ENCODE measurements at regions of chr6 and their contacts with region 1.

Region 1: DNA sequence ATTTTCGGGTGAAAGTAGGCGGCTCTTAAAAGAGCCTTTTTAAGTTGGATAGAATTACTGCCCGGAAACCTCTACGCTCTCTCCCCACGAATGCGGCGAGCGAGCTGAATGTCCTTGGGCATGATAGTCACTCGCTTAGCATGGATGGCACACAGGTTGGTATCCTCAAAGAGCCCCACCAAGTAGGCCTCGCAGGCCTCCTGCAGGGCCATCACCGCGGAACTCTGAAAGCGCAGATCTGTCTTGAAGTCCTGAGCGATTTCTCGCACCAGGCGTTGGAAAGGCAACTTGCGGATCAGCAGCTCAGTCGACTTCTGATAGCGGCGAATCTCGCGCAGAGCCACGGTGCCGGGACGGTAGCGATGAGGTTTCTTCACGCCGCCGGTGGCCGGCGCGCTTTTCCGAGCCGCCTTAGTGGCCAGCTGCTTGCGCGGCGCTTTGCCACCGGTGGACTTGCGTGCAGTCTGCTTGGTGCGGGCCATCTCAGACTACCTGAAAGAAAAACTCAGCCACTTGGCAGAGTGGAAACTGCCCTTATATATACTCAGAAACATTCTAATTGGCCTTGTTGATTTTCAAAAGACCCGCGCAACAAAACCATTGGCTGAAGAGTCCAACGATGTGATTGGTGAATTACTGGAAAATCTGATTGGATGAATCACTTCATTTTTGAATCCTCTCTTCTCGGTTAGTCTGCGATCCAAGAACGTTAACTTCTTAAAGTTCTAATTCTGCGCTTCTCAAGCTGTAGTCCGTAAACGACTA is 93.9 kb upstream of the BTN3A2 start:
- DNase-seq: peak; percentile 90
- ATAC-seq: peak; percentile 19
- H3K4me3 ChIP-seq: peak overlapping the region; percentile 63 to 88 (median 75)
- H3K4me3 Mint-ChIP-seq: no peak overlapping the region
- H3K27ac ChIP-seq: peak overlapping the region; percentile 79 to 86
- H3K27ac Mint-ChIP-seq: no peak overlapping the region
- H3K4me1 ChIP-seq: peaks cover 15 to 37% of the 10 kb centered on the region in 2 donors
- H3K4me1 Mint-ChIP-seq: peaks cover 20% of the 10 kb centered on the region
- H3K27me3 ChIP-seq: no peaks in the 10 kb centered on the region
- H3K27me3 Mint-ChIP-seq: no peaks in the 10 kb centered on the region
- CTCF ChIP-seq: no peak

Region 2: DNA sequence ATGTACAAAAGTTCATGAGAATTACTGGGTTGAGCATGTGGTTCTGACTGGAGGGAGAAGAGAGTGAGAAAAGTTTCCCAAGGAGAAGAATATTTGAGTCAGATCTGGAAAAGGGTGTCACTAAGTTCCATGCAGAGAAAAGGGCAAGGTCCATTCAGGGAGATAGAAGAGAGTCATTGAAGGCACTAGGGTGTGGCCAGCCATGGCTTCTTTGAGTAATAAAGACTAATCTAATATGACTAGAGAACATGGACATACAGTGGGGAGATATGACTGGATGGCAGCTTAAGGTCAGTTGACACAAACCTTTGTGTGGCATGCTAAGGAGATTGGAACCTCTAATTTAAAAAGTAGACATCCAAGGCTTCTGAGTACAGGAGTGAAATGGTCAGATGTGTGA is 527.2 kb before region 1 on chr6:
- CTCF ChIA-PET with region 1: no interaction called
- POLR2A ChIA-PET with region 1: no interaction called
- intact Hi-C with region 1: no loop called
- DNase-seq: no peak
- ATAC-seq: no peak
- H3K4me3 ChIP-seq: no peak overlapping the region
- H3K4me3 Mint-ChIP-seq: no peak overlapping the region
- H3K27ac ChIP-seq: no peak overlapping the region
- H3K27ac Mint-ChIP-seq: no peak overlapping the region
- H3K4me1 ChIP-seq: no peaks in the 10 kb centered on the region
- H3K4me1 Mint-ChIP-seq: peaks cover under 1% of the 10 kb centered on the region
- H3K27me3 ChIP-seq: peaks cover 0 to under 1% (median 0%) of the 10 kb centered on the region in 4 experiments
- H3K27me3 Mint-ChIP-seq: peaks cover 8% of the 10 kb centered on the region
- CTCF ChIP-seq: no peak

Region 3: GRCh38 chr6:25793970-25794369 is 477.1 kb before region 1 on chr6:
- CTCF ChIA-PET with region 1: no interaction called
- POLR2A ChIA-PET with region 1: no interaction called
- intact Hi-C with region 1: no loop called
- DNase-seq: no peak
- ATAC-seq: no peak
- H3K4me3 ChIP-seq: no peak overlapping the region
- H3K4me3 Mint-ChIP-seq: no peak overlapping the region
- H3K27ac ChIP-seq: no peak overlapping the region
- H3K27ac Mint-ChIP-seq: no peak overlapping the region
- H3K4me1 ChIP-seq: no peaks in the 10 kb centered on the region
- H3K4me1 Mint-ChIP-seq: no peaks in the 10 kb centered on the region
- H3K27me3 ChIP-seq: no peaks in the 10 kb centered on the region
- H3K27me3 Mint-ChIP-seq: peaks cover 10% of the 10 kb centered on the region
- CTCF ChIP-seq: no peak

Region 4: DNA sequence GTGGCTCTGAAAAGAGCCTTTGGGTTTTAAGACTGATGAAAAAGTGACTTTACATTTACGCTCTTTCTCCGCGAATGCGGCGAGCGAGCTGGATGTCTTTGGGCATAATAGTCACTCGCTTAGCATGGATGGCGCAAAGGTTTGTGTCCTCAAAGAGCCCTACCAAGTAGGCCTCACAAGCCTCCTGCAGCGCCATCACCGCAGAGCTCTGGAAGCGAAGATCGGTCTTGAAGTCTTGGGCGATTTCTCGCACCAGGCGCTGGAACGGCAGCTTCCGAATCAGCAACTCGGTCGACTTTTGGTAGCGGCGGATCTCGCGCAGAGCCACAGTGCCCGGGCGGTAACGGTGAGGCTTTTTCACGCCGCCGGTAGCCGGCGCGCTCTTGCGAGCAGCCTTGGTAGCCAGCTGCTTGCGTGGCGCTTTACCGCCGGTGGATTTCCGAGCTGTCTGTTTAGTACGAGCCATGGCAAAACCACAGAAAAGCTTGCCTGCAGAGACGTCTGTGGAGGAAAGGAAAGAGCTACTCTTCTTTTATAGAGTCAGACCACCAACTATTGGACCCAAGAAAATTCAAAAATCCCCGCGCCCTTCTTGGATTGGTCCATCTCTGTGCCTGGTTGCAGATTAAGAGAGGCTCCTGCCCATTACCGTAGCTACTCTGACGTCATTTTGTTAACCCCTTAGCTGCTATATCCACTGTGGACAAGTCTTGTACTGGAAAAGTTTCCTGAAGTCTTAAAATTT is 239.3 kb before region 1 on chr6:
- CTCF ChIA-PET with region 1: no interaction called
- POLR2A ChIA-PET with region 1: interaction called, 3 read pairs
- intact Hi-C with region 1: loop called (anchors 5 kb)
- DNase-seq: peak; percentile 90
- ATAC-seq: peak; percentile 63
- H3K4me3 ChIP-seq: peak overlapping the region; percentile 67 to 85 (median 69)
- H3K4me3 Mint-ChIP-seq: peak overlapping the region; percentile 96
- H3K27ac ChIP-seq: peak overlapping the region; percentile 76 to 78
- H3K27ac Mint-ChIP-seq: peak overlapping the region; percentile 87
- H3K4me1 ChIP-seq: peaks cover 26 to 36% of the 10 kb centered on the region in 2 donors
- H3K4me1 Mint-ChIP-seq: peaks cover 46% of the 10 kb centered on the region
- H3K27me3 ChIP-seq: no peaks in the 10 kb centered on the region
- H3K27me3 Mint-ChIP-seq: no peaks in the 10 kb centered on the region
- CTCF ChIP-seq: no peak

Region 5: GRCh38 chr6:26204332-26205165 is 66.5 kb before region 1 on chr6:
- CTCF ChIA-PET with region 1: interaction called, 31 read pairs
- POLR2A ChIA-PET with region 1: interaction called, 73 read pairs
- intact Hi-C with region 1: loop called (anchors 2 kb)
- DNase-seq: peak; percentile 96
- ATAC-seq: peak; percentile 65
- H3K4me3 ChIP-seq: peak overlapping the region; percentile 76 to 94 (median 81)
- H3K4me3 Mint-ChIP-seq: no peak overlapping the region
- H3K27ac ChIP-seq: peak overlapping the region; percentile 88 to 96
- H3K27ac Mint-ChIP-seq: no peak overlapping the region
- H3K4me1 ChIP-seq: peaks cover 26 to 38% of the 10 kb centered on the region in 2 donors
- H3K4me1 Mint-ChIP-seq: peaks cover 30% of the 10 kb centered on the region
- H3K27me3 ChIP-seq: no peaks in the 10 kb centered on the region
- H3K27me3 Mint-ChIP-seq: no peaks in the 10 kb centered on the region
- CTCF ChIP-seq: no peak

Region 6: DNA sequence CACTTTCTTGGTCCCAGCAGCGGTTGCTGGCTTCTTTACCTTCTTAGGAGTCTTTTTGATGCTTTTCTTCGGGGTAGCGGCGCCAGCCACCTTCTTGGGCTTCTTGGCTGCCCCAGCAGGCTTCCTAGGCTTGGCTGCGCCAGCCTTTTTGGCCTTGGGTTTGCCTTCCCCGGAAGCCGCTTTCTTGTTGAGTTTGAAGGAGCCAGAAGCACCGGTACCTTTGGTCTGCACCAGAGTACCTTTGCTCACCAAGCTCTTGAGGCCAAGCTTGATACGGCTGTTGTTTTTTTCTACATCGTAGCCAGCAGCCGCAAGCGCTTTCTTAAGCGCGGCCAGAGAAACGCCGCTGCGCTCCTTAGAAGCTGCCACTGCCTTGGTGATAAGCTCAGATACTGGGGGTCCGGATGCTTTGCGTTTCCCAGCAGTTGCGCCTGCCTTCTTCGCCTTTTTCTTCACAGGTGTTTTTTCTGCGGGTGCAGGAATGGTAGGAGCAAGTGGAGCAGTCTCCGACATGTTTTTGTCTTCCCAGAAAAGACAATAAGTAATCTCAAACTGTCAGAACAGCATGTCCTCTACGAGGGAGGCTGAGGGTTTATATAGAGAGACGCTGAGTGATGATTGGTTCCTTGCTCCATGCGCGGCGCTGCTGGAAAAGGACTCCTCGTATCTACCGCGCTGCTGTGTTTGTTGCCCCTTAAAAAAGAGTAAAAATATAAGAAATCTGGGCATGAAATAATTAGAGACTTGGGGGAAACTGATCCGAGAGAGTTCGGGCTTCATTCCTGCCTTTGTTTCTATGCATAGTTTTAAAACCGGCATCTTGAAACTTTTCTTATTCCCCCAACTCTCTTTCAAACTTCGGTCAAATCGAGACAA is 36.4 kb before region 1 on chr6:
- CTCF ChIA-PET with region 1: interaction called, 14 read pairs
- POLR2A ChIA-PET with region 1: interaction called, 60 read pairs
- intact Hi-C with region 1: loop called (anchors 5 kb)
- DNase-seq: peak; percentile 87
- ATAC-seq: peak; percentile 76
- H3K4me3 ChIP-seq: peak overlapping the region; percentile 70 to 99 (median 85)
- H3K4me3 Mint-ChIP-seq: peak overlapping the region; percentile 93
- H3K27ac ChIP-seq: peak overlapping the region; percentile 86 to 90
- H3K27ac Mint-ChIP-seq: peak overlapping the region; percentile 95
- H3K4me1 ChIP-seq: peaks cover 13 to 21% of the 10 kb centered on the region in 2 donors
- H3K4me1 Mint-ChIP-seq: peaks cover 23% of the 10 kb centered on the region
- H3K27me3 ChIP-seq: no peaks in the 10 kb centered on the region
- H3K27me3 Mint-ChIP-seq: no peaks in the 10 kb centered on the region
- CTCF ChIP-seq: no peak

Region 7: GRCh38 chr6:26285143-26286134 is 14.4 kb after region 1 on chr6:
- CTCF ChIA-PET with region 1: interaction called, 51 read pairs
- POLR2A ChIA-PET with region 1: interaction called, 99 read pairs
- intact Hi-C with region 1: loop called (anchors 1 kb)
- DNase-seq: peak; percentile 99
- ATAC-seq: peak; percentile 76
- H3K4me3 ChIP-seq: peak overlapping the region; percentile 52 to 99 (median 71)
- H3K4me3 Mint-ChIP-seq: peak overlapping the region; percentile 90
- H3K27ac ChIP-seq: peak overlapping the region; percentile 93 to 97
- H3K27ac Mint-ChIP-seq: peak overlapping the region; percentile 95
- H3K4me1 ChIP-seq: peaks cover 17 to 18% of the 10 kb centered on the region in 2 donors
- H3K4me1 Mint-ChIP-seq: peaks cover 33% of the 10 kb centered on the region
- H3K27me3 ChIP-seq: no peaks in the 10 kb centered on the region
- H3K27me3 Mint-ChIP-seq: peaks cover 3% of the 10 kb centered on the region
- CTCF ChIP-seq: no peak

Region 8: DNA sequence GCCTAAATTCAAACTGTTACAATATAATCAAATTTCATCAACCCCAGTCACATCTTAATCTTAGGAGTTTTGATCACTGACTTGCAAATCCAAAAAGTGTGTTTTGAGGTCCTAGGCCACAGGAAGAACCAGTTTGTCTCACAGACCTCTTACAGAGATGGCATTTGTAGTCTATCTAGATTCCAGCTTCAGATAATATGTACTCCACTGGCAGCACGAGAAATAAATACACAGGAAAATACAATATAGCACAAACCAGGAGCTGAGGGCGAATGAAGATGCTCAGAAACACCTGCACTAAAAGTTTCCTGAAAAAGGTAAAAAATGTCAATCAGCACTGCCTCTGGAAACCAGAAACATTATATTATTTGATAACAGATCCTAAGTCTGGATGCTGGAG is 168.6 kb after region 1 on chr6:
- CTCF ChIA-PET with region 1: no interaction called
- POLR2A ChIA-PET with region 1: no interaction called
- intact Hi-C with region 1: loop called (anchors 2 kb)
- DNase-seq: peak; percentile 49
- ATAC-seq: no peak
- H3K4me3 ChIP-seq: peak overlapping the region; percentile 76 to 100 (median 87)
- H3K4me3 Mint-ChIP-seq: peak overlapping the region; percentile 98
- H3K27ac ChIP-seq: peak overlapping the region; percentile 94 to 96
- H3K27ac Mint-ChIP-seq: peak overlapping the region; percentile 90
- H3K4me1 ChIP-seq: peaks cover 19 to 31% of the 10 kb centered on the region in 2 donors
- H3K4me1 Mint-ChIP-seq: peaks cover 38% of the 10 kb centered on the region
- H3K27me3 ChIP-seq: no peaks in the 10 kb centered on the region
- H3K27me3 Mint-ChIP-seq: no peaks in the 10 kb centered on the region
- CTCF ChIP-seq: no peak